ENCODE measurements at regions of chr16 and their contacts with region 1.

Region 1: DNA sequence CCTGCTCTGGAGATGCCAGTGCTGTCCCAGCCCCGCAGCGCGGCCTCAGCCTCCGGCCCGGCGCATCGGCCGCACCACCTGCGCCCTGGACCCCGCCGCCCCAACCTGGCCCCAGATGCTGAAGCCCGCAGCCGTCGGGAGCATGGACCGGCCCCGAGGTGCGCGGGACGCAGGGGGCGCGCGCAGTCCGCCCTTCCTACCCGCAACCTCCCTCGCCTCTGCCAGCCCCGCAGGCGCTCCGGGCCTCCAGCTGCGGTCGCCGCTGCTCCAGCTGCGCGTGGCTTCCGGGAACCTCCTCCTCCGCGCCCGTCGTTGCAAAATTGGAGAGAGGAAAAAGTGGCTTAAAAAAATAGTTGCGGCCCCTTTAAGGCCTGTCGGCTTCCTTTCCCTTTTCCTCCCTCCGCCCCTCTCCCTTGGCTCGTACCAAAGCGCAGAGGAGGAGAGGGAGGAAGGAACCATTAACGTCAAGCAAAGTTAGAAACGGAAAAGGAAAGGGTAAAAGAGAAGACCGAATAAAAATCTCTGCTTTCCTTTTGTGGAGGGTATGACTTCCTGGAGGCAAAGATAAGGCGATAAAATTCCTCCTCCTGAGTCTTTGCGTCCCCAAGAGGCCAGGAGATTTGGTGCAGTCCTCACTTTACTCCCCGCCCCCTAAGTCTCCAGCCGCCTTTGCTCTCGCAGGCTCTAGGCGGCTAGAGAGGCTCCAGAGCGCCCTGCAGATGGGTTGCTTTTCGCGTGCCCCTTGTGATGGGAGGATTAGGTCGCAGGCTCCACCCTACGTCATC is at the start of gene CDIPT:
- DNase-seq: peak; percentile 85 to 98 (median 90)
- ATAC-seq: peak; percentile 96
- H3K4me3 ChIP-seq: peak within 1 kb of the TSS; percentile 76
- H3K4me3 Mint-ChIP-seq: peak within 1 kb of the TSS; percentile 95
- H3K27ac ChIP-seq: peak within 1 kb of the TSS; percentile 87 to 97
- H3K27ac Mint-ChIP-seq: peak within 1 kb of the TSS; percentile 95
- H3K4me1 ChIP-seq: peaks cover 30% of the 10 kb centered on the region
- H3K4me1 Mint-ChIP-seq: peaks cover 22% of the 10 kb centered on the region
- H3K27me3 ChIP-seq: no peaks in the 10 kb centered on the region
- H3K27me3 Mint-ChIP-seq: no peaks in the 10 kb centered on the region
- CTCF ChIP-seq: peak; percentile 70
- total RNA-seq, gene CDIPT: 25.7 to 27.0 TPM

Region 2: GRCh38 chr16:29107299-29107698 is 755.8 kb before region 1 on chr16:
- CTCF ChIA-PET with region 1: no interaction called
- POLR2A ChIA-PET with region 1: no interaction called
- intact Hi-C with region 1: no loop called
- DNase-seq: no peak
- ATAC-seq: no peak
- H3K4me3 ChIP-seq: no peak overlapping the region
- H3K4me3 Mint-ChIP-seq: no peak overlapping the region
- H3K27ac ChIP-seq: no peak overlapping the region
- H3K27ac Mint-ChIP-seq: no peak overlapping the region
- H3K4me1 ChIP-seq: no peaks in the 10 kb centered on the region
- H3K4me1 Mint-ChIP-seq: peaks cover 7% of the 10 kb centered on the region
- H3K27me3 ChIP-seq: no peaks in the 10 kb centered on the region
- H3K27me3 Mint-ChIP-seq: no peaks in the 10 kb centered on the region
- CTCF ChIP-seq: no peak

Region 3: GRCh38 chr16:29825145-29826044 is 37.7 kb before region 1 on chr16:
- CTCF ChIA-PET with region 1: interaction called, 3 read pairs
- POLR2A ChIA-PET with region 1: interaction called, 9 read pairs
- intact Hi-C with region 1: loop called in 1 of 2 experiments (anchors 5 kb)
- DNase-seq: peak in 6 of 14 experiments; percentile 18 to 64 (median 48)
- ATAC-seq: peak; percentile 22
- H3K4me3 ChIP-seq: peak overlapping the region; percentile 13
- H3K4me3 Mint-ChIP-seq: peak overlapping the region; percentile 84
- H3K27ac ChIP-seq: peak overlapping the region; percentile 14 to 40
- H3K27ac Mint-ChIP-seq: peak overlapping the region; percentile 83
- H3K4me1 ChIP-seq: peaks cover 100% of the 10 kb centered on the region
- H3K4me1 Mint-ChIP-seq: peaks cover 79% of the 10 kb centered on the region
- H3K27me3 ChIP-seq: no peaks in the 10 kb centered on the region
- H3K27me3 Mint-ChIP-seq: no peaks in the 10 kb centered on the region
- CTCF ChIP-seq: no peak

Region 4: GRCh38 chr16:29877266-29877961 is 14.3 kb after region 1 on chr16:
- CTCF ChIA-PET with region 1: no interaction called
- POLR2A ChIA-PET with region 1: interaction called, 10 read pairs
- intact Hi-C with region 1: no loop called
- DNase-seq: peak in 11 of 14 experiments; percentile 18 to 77 (median 38)
- ATAC-seq: peak; percentile 66
- H3K4me3 ChIP-seq: peak overlapping the region; percentile 45
- H3K4me3 Mint-ChIP-seq: peak overlapping the region; percentile 89
- H3K27ac ChIP-seq: no peak overlapping the region
- H3K27ac Mint-ChIP-seq: no peak overlapping the region
- H3K4me1 ChIP-seq: peaks cover 20% of the 10 kb centered on the region
- H3K4me1 Mint-ChIP-seq: peaks cover 18% of the 10 kb centered on the region
- H3K27me3 ChIP-seq: peaks cover 23 to 29% of the 10 kb centered on the region in 2 experiments
- H3K27me3 Mint-ChIP-seq: peaks cover 29% of the 10 kb centered on the region
- CTCF ChIP-seq: no peak

Region 5: DNA sequence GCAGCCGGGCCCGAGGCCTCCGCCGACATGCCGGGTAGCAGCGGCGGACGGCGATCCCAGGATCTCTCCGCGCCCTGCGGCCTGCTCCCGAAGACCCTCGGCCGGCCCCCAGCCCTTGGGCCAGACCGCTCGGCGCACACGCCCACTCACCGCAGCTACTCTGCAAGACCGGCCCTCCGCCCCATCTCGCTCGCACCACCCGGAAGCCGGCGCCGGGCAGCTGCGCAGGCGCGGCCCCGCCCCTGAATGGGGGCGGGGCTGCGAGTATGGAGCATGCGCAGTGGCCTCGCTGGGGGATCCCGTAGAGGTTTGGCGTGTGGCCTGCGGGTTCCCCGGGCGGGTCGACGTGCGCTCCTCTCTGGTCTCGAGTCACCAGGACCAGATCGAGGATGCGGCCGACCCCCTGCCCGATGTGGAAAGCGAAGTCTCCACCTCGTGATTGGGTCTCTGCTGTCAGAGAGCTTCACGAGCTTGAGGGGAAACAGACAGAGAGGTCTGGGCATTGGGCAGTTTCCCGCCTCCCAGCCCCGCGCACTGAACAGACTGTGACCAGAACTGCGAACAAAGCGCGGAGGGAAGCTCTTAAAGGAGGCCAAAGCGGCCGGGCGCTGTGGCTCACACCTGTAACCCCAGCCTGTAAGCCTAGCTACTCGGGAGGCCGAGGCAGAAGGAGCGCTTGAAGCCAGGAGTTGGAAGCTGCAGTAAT is 63.1 kb after region 1 on chr16 and contains the start of gene KCTD13:
- CTCF ChIA-PET with region 1: no interaction called
- POLR2A ChIA-PET with region 1: interaction called, 6 read pairs
- intact Hi-C with region 1: loop called in 1 of 2 experiments (anchors 2 kb)
- DNase-seq: peak; percentile 75 to 94 (median 86)
- ATAC-seq: peak; percentile 89
- H3K4me3 ChIP-seq: peak within 1 kb of the TSS; percentile 74
- H3K4me3 Mint-ChIP-seq: peak within 1 kb of the TSS; percentile 95
- H3K27ac ChIP-seq: peak within 1 kb of the TSS; percentile 42 to 72
- H3K27ac Mint-ChIP-seq: peak within 1 kb of the TSS; percentile 93
- H3K4me1 ChIP-seq: peaks cover 30% of the 10 kb centered on the region
- H3K4me1 Mint-ChIP-seq: peaks cover 38% of the 10 kb centered on the region
- H3K27me3 ChIP-seq: no peaks in the 10 kb centered on the region
- H3K27me3 Mint-ChIP-seq: no peaks in the 10 kb centered on the region
- CTCF ChIP-seq: no peak
- total RNA-seq, gene KCTD13: 40.0 to 43.8 TPM